Natural killer cell (primary cell): ENCODE measurements at regions of chr14 and their contacts with region 1.

Region 1: DNA sequence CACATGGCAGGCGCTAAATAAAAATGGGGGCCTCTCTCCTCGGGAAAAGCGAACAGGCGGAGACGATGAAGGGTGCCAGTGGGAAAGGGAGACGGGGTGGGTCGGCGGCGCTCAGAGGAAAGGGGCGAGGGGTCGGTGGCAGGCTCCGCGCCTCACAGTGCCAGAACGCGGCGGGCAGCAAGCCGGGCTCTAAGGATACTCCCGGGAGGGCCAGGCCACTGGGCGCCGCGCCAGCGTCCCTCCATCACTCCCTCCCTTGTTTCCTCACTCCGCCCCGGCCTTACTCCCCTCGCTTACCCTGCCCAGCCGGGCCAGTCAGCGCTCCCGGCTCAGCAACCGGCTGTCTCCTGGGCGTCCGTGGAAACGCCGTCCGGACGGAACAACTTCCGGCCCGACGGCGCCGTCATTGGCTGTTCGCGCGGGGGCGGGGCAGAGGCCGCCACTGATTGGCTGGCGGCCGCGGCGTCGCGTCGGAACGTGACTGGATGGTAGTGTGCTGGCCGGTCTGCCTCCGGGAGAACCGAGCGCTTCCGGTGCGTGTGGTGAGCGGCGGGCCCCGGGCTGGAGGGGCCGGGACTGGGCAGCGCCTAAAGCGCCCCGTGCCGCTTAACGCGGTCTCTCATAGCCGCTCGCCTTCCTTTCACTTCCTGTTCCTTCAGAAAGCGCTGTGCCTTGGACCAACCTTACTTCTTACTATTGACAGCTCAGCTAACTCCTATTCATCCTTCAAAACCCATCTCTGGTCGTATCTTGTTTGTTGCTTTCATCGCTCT is 53.0 kb downstream of the SLC25A47 start:
- DNase-seq: peak; percentile 94 to 95
- ATAC-seq: peak; percentile 85 to 94 (median 93)
- H3K4me3 ChIP-seq: peak within 1 kb of the TSS; percentile 58
- H3K4me3 Mint-ChIP-seq: peak within 1 kb of the TSS; percentile 93
- H3K27ac ChIP-seq: peak within 1 kb of the TSS; percentile 83
- H3K27ac Mint-ChIP-seq: peak within 1 kb of the TSS; percentile 88 to 94
- H3K4me1 ChIP-seq: peaks cover 30% of the 10 kb centered on the region
- H3K4me1 Mint-ChIP-seq: peaks cover 24 to 29% of the 10 kb centered on the region in 2 donors
- H3K27me3 ChIP-seq: no peaks in the 10 kb centered on the region
- H3K27me3 Mint-ChIP-seq: no peaks in the 10 kb centered on the region
- CTCF ChIP-seq: no peak

Region 2: DNA sequence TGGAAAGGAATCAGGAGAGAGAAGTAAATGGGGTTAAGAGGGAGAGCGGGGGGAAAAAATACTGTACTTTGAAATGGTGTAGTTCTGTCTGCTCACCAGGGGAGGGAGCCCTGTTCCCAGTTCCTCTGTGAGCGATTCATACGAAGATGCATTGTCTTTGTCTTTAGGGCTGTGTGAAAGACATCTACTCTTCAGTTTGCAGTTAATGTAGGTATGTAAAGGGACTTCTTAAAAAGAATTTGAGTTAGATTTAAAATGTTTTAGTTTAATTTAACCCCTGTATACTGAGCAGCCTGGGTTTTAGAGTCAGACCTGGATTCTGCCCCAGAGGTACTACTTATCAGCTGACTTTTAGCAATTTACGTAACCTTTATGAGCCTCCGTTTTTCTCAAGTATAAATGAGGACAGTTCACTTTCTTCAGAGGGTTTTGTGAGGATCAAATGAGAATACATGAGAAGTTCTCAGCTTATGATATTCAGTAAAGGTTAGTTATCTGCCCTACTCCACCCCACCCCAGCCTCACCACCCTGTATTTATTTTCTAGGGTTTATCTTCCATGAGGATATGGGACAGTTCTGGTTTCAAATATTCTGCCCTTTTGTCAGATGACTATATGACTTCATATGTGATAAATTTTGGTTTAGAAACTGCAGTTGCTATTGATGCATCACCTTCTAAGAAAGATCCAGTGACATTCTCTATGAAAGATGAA is 393.5 kb before region 1 on chr14:
- intact Hi-C with region 1: loop called (anchors 1 kb)
- DNase-seq: peak; percentile 59 to 89
- ATAC-seq: peak; percentile 95 to 100 (median 100)
- H3K4me3 ChIP-seq: no peak overlapping the region
- H3K4me3 Mint-ChIP-seq: no peak overlapping the region
- H3K27ac ChIP-seq: no peak overlapping the region
- H3K27ac Mint-ChIP-seq: no peak overlapping the region
- H3K4me1 ChIP-seq: no peaks in the 10 kb centered on the region
- H3K4me1 Mint-ChIP-seq: peaks cover 0 to 4% of the 10 kb centered on the region in 2 donors
- H3K27me3 ChIP-seq: no peaks in the 10 kb centered on the region
- H3K27me3 Mint-ChIP-seq: no peaks in the 10 kb centered on the region
- CTCF ChIP-seq: peak; percentile 97

Region 3: GRCh38 chr14:100147181-100147631 is 228.9 kb before region 1 on chr14:
- intact Hi-C with region 1: loop called (anchors 2 kb)
- DNase-seq: peak; percentile 64 to 83
- ATAC-seq: peak; percentile 80 to 92 (median 82)
- H3K4me3 ChIP-seq: no peak overlapping the region
- H3K4me3 Mint-ChIP-seq: peak overlapping the region; percentile 68
- H3K27ac ChIP-seq: peak overlapping the region; percentile 46
- H3K27ac Mint-ChIP-seq: peak overlapping the region; percentile 65 to 77
- H3K4me1 ChIP-seq: peaks cover 30% of the 10 kb centered on the region
- H3K4me1 Mint-ChIP-seq: peaks cover 5 to 39% of the 10 kb centered on the region in 2 donors
- H3K27me3 ChIP-seq: no peaks in the 10 kb centered on the region
- H3K27me3 Mint-ChIP-seq: no peaks in the 10 kb centered on the region
- CTCF ChIP-seq: no peak

Region 4: GRCh38 chr14:100239840-100240724 is 136.1 kb before region 1 on chr14:
- intact Hi-C with region 1: loop called (anchors 5 kb)
- DNase-seq: peak; percentile 80 to 92
- ATAC-seq: peak; percentile 37 to 63 (median 48)
- H3K4me3 ChIP-seq: peak overlapping the region; percentile 84
- H3K4me3 Mint-ChIP-seq: peak overlapping the region; percentile 93
- H3K27ac ChIP-seq: peak overlapping the region; percentile 90
- H3K27ac Mint-ChIP-seq: peak overlapping the region; percentile 94 to 97
- H3K4me1 ChIP-seq: peaks cover 31% of the 10 kb centered on the region
- H3K4me1 Mint-ChIP-seq: peaks cover 38 to 61% of the 10 kb centered on the region in 2 donors
- H3K27me3 ChIP-seq: no peaks in the 10 kb centered on the region
- H3K27me3 Mint-ChIP-seq: no peaks in the 10 kb centered on the region
- CTCF ChIP-seq: peak; percentile 66

Region 5: DNA sequence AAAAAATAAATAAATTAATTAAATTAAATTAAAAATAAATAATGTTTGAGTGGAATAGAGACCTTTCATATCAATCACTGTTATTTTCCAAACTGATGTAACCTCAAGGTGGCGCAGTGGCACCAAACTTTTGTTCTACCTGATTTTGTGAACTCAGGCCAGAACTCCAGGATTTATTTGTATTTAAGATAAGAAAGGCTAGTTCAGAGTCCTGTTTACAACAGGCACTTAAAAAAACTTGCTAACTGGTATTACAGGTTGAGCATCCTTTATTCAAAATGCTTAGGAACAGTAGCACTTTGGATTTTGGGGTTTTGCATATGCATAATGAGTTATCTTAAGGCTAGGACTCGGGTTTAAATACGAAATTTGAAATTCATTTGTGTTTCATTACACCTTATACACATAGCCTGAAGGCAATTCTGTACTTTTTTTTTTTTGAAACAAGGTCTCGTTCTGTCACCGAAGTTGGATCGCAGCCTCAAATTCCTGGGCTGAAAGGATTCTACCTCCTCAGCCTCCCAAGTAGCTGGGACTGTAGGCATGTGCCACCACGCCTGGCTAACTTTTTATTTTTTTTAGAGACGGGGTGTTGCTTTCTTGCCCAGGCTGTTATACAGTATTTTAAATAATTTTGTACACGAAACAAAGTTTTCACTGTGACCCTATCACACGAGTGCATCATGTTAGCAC is 104.8 kb before region 1 on chr14:
- intact Hi-C with region 1: loop called (anchors 2 kb)
- DNase-seq: peak in 1 of 2 donors; percentile 58
- ATAC-seq: peak in 1 of 3 donors; percentile 36
- H3K4me3 ChIP-seq: no peak overlapping the region
- H3K4me3 Mint-ChIP-seq: no peak overlapping the region
- H3K27ac ChIP-seq: no peak overlapping the region
- H3K27ac Mint-ChIP-seq: no peak overlapping the region
- H3K4me1 ChIP-seq: peaks cover 4% of the 10 kb centered on the region
- H3K4me1 Mint-ChIP-seq: peaks cover 47 to 55% of the 10 kb centered on the region in 2 donors
- H3K27me3 ChIP-seq: no peaks in the 10 kb centered on the region
- H3K27me3 Mint-ChIP-seq: no peaks in the 10 kb centered on the region
- CTCF ChIP-seq: peak; percentile 23

Region 6: GRCh38 chr14:100285021-100285912 is 90.9 kb before region 1 on chr14:
- intact Hi-C with region 1: loop called (anchors 1 kb)
- DNase-seq: peak; percentile 83 to 90
- ATAC-seq: peak; percentile 93 to 96 (median 95)
- H3K4me3 ChIP-seq: peak overlapping the region; percentile 68
- H3K4me3 Mint-ChIP-seq: peak overlapping the region; percentile 47
- H3K27ac ChIP-seq: peak overlapping the region; percentile 73
- H3K27ac Mint-ChIP-seq: peak overlapping the region; percentile 53 to 83
- H3K4me1 ChIP-seq: peaks cover 14% of the 10 kb centered on the region
- H3K4me1 Mint-ChIP-seq: peaks cover 5 to 6% of the 10 kb centered on the region in 2 donors
- H3K27me3 ChIP-seq: no peaks in the 10 kb centered on the region
- H3K27me3 Mint-ChIP-seq: no peaks in the 10 kb centered on the region
- CTCF ChIP-seq: peak; percentile 95

Region 7: DNA sequence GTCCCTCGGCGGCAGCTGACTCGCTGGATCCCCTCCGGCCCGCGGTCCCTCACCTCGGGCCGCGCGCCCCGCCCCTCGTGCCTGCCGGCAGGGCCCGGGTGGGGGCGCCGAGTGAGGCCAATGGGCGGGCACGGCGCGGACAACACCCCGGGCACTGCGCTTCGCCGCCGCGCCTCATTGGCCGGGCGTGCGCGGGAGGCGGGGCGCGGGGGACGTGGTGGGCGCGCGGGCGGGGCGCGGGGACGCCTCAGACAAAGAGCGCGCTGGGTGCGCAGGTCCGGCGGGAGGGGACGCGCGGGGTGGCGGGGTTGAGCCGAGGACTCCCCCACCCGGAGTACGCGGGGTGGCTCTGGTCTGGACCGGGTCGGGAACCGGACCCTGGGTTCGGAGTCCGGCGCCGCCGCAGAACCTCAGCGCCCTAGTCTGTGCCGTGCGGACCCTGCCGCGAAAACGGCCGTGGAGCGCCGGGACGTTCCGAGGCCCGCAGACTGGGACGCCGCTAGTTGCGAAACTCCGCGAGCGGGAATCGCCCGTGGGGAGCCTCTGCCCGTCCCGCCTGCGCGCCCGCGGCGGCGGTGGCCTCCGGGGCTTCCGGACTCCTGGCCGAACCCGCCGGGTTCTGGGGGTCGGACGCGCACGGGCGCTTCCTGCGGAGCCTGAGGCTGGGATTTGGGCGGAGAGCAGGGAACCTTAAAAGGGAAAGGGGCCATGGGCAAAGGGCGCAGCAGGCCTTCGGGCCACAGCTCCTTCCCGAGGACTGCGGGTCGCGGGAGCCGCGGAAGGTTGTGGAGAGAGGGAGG is 69.5 kb before region 1 on chr14 and contains the start of gene SLC25A29:
- intact Hi-C with region 1: loop called (anchors 5 kb)
- DNase-seq: peak; percentile 80 to 81
- ATAC-seq: peak; percentile 93 to 96 (median 95)
- H3K4me3 ChIP-seq: peak within 1 kb of the TSS; percentile 69
- H3K4me3 Mint-ChIP-seq: peak within 1 kb of the TSS; percentile 93
- H3K27ac ChIP-seq: peak within 1 kb of the TSS; percentile 64
- H3K27ac Mint-ChIP-seq: peak within 1 kb of the TSS; percentile 64 to 82
- H3K4me1 ChIP-seq: peaks cover 32% of the 10 kb centered on the region
- H3K4me1 Mint-ChIP-seq: peaks cover 21 to 23% of the 10 kb centered on the region in 2 donors
- H3K27me3 ChIP-seq: no peaks in the 10 kb centered on the region
- H3K27me3 Mint-ChIP-seq: peaks cover 0 to 5% of the 10 kb centered on the region in 2 donors
- CTCF ChIP-seq: no peak
- total RNA-seq, gene SLC25A29: 8.6 to 80.7 (median 69.3) TPM

Region 8: DNA sequence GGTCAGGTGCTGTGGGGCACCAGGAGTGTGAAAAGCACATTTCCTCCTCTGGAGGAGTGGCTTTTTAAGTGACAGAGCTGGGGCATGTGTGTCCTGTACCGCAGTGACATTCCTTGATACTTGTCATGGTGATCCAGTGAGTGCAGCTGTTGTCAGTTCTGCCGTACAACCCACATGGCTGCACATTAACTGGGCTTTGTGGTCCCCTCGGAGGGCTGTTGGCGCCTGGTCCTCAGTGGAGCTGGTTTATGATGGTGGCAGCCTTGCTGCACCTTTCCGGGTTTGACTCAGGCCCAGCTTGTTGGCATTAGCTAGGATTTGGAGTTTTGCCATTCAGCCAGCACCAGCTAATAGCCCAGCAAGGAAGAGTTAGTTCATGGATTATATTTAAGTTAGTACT is 24.0 kb after region 1 on chr14:
- intact Hi-C with region 1: no loop called
- DNase-seq: no peak
- ATAC-seq: no peak
- H3K4me3 ChIP-seq: no peak overlapping the region
- H3K4me3 Mint-ChIP-seq: no peak overlapping the region
- H3K27ac ChIP-seq: no peak overlapping the region
- H3K27ac Mint-ChIP-seq: no peak overlapping the region
- H3K4me1 ChIP-seq: peaks cover 25% of the 10 kb centered on the region
- H3K4me1 Mint-ChIP-seq: peaks cover 44 to 47% of the 10 kb centered on the region in 2 donors
- H3K27me3 ChIP-seq: no peaks in the 10 kb centered on the region
- H3K27me3 Mint-ChIP-seq: peaks cover 10 to 22% of the 10 kb centered on the region in 2 donors
- CTCF ChIP-seq: no peak